ENCODE measurements at regions of chr11 and their contacts with region 1.

Region 1: GRCh38 chr11:62217191-62217748 is 8.8 kb downstream of the SCGB2A1 start:
- DNase-seq: peak; percentile 8
- ATAC-seq: no peak
- H3K4me3 Mint-ChIP-seq: no peak overlapping the region
- H3K27ac Mint-ChIP-seq: no peak overlapping the region
- H3K4me1 Mint-ChIP-seq: no peaks in the 10 kb centered on the region
- H3K27me3 Mint-ChIP-seq: peaks cover 11% of the 10 kb centered on the region

Region 2: DNA sequence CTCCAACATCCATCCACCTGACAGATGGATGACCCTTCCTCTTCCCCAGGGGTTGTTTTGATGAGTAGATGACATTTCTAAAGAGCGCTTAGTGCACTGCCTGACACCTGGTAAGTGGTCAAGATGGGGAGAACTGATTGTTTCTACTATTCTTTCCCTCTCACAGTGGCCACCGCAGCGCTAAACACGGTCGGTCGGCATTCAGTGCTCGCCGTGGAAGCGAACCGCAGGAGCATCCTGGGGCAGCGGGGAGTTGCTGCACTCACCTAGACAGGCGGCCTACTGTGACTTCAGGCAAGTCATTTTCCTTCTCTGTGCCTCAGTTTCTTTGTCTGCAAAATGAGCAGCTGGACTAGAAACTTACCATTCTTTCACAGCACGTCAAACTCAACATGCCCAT is 272.1 kb before region 1 on chr11:
- CTCF ChIA-PET with region 1: no interaction called
- POLR2A ChIA-PET with region 1: no interaction called
- intact Hi-C with region 1: no loop called
- DNase-seq: no peak
- ATAC-seq: no peak
- H3K4me3 Mint-ChIP-seq: no peak overlapping the region
- H3K27ac Mint-ChIP-seq: no peak overlapping the region
- H3K4me1 Mint-ChIP-seq: peaks cover 5% of the 10 kb centered on the region
- H3K27me3 Mint-ChIP-seq: peaks cover 2% of the 10 kb centered on the region

Region 3: GRCh38 chr11:62370743-62371440 is 153.6 kb after region 1 on chr11:
- CTCF ChIA-PET with region 1: no interaction called
- POLR2A ChIA-PET with region 1: no interaction called
- intact Hi-C with region 1: loop called in 1 of 2 experiments (anchors 5 kb)
- DNase-seq: peak; percentile 78
- ATAC-seq: peak; percentile 94
- H3K4me3 Mint-ChIP-seq: peak overlapping the region; percentile 58
- H3K27ac Mint-ChIP-seq: peak overlapping the region; percentile 94
- H3K4me1 Mint-ChIP-seq: peaks cover 7% of the 10 kb centered on the region
- H3K27me3 Mint-ChIP-seq: no peaks in the 10 kb centered on the region

Measured in activated CD4-positive, alpha-beta T cell treated with anti-CD3 and anti-CD28 coated beads for 36 hours (primary cell).